AG04449 (cell line): ENCODE measurements at regions of chr12 and their contacts with region 1.

Region 1: DNA sequence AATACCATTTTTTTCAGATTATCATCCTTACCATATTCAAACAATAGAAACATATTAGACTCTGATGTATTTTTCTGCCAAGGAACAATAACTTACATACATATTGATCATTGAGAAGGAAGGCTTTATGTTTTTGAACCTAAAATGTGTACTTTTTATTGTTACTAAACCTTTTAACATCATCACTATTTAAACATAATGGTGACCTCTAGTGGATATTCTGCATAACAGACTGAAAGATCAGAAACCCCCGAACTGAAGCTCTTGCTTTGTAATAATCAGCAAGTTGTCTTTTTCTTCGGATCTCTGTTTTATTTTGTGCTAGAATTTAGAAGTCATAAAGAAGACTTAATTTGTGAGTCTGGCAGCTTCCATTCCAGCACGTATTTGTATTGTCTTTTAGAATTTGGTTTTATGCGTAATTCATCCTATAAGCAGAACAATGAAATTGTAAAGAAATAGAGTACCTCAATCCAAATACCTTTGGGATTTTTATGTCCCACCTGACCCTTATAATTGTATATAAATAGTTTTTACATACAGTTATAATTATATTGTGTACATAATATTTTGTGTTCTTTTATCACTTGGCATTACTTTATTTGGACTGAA is 125.9 kb upstream of the ATF1 start:
- DNase-seq: no peak
- H3K4me3 ChIP-seq: no peak overlapping the region
- CTCF ChIP-seq: peak; percentile 7

Region 2: GRCh38 chr12:50400598-50401364 is 237.2 kb before region 1 on chr12 and contains the start of gene LARP4:
- CTCF ChIA-PET with region 1: no interaction called
- POLR2A ChIA-PET with region 1: no interaction called
- DNase-seq: peak; percentile 50
- H3K4me3 ChIP-seq: peak within 1 kb of the TSS; percentile 91
- CTCF ChIP-seq: no peak

Region 3: DNA sequence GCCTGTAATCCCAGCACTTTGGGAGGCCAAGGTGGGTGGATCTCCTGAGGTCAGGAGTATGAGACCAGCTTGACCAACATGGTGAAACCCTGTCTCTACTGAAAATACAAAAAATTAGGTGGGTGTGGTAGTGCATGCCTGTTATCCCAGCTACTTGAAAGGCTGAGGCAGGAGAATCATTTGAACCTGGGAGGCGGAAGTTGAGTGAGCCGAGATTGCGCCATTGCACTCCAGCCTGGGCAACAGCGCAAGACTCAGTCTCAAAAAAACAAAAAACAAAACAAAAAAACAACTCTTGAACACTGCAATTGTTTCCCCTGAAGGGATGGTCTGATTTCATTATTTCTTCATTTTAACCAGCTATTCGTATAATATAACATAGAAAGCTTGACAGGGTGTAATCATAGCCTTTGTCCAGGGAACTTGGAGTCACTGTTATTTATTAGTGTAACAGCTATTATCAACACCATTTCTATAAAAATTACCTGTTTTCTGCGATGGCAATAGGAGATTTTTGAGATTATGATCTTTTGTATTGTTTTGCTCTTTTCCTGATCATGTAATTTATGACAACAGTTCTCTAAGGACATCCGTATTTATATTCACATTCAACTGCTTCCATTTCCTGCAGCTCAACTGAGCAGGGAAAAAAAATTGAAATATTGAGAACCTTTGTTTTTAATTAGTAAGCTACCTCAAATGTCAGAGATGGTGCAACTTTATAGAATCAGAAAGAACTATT is 38.5 kb before region 1 on chr12:
- CTCF ChIA-PET with region 1: interaction called, 10 read pairs
- POLR2A ChIA-PET with region 1: no interaction called
- DNase-seq: no peak
- H3K4me3 ChIP-seq: no peak overlapping the region
- CTCF ChIP-seq: no peak

Region 4: DNA sequence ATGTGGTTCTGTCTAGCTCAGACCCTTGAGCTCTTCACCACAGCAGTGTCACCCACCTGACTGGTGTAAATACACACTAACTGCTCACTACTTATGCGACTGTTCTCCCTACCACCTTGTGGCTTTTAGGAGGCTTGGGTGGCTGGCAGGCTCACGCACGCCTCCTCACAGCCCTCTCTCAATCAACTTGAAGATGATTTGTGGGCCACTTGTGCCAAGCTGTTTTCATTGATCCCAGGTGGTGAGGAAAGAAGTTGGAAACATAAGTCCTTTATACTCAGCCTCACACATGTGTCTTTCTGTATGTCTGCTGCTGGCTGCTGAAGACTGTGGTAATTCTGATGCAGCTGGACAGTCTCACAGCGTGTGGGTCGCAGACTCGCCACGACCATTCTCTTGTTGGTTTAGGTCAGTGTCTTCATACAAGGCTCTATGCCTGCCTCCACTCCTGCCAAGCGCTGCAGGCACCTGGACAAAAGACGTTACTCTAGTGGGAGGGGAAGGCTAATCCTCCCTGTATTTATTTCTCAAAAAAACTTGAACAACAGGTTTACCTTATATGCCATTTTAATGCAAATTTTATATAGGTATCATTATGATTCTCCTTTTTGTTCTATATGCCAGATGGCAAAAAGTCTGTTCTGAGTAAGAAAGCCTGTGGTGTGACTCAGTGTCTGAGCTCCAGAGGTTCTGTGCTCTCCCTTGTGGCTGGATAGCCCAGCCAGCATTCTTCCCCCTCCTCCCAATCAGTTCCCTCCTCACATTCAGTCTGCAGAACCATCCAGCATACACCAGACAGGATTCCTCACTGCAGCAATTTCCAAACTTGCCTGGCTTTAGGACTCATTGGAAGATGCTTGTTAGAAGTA is 17.6 kb before region 1 on chr12:
- CTCF ChIA-PET with region 1: interaction called, 10 read pairs
- POLR2A ChIA-PET with region 1: no interaction called
- DNase-seq: peak; percentile 78
- H3K4me3 ChIP-seq: peak overlapping the region; percentile 16; the same call in 1 of the 2 replicates
- CTCF ChIP-seq: peak; percentile 18

Region 5: DNA sequence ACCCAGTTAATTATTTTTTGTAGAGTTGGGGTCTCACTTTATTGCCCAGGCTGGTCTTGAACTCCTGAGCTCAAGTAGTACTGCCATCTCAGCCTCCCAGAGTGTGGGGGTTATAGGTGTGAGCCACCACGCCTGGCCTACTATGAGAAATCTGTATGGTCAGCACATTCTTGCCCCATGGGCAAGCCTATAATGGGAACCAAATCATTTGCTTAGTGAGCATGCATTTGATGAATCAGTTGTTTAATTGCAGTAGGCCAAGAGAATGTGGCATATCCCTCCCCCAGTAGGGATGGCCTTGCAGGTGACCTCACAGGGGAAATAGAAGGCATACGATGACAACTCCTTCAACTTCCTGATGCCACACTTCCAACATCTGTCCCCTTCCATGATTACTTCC is 10.5 kb before region 1 on chr12:
- CTCF ChIA-PET with region 1: interaction called, 12 read pairs
- POLR2A ChIA-PET with region 1: no interaction called
- DNase-seq: no peak
- H3K4me3 ChIP-seq: no peak overlapping the region
- CTCF ChIP-seq: no peak

Region 6: GRCh38 chr12:50661300-50662115 is 23.5 kb after region 1 on chr12:
- CTCF ChIA-PET with region 1: interaction called, 10 read pairs
- POLR2A ChIA-PET with region 1: no interaction called
- DNase-seq: no peak
- H3K4me3 ChIP-seq: no peak overlapping the region
- CTCF ChIP-seq: no peak